ENCODE measurements at regions of chr12 and their contacts with region 1.

Region 1: GRCh38 chr12:53424626-53425514 is 1.2 kb downstream of the AMHR2 start:
- DNase-seq: peak; percentile 88
- H3K4me3 ChIP-seq: peak overlapping the region in 1 of 2 donors; percentile 5
- H3K27ac ChIP-seq: peak overlapping the region; percentile 65 to 81
- H3K4me1 ChIP-seq: peaks cover 29% of the 10 kb centered on the region
- H3K27me3 ChIP-seq: no peaks in the 10 kb centered on the region
- CTCF ChIP-seq: no peak
- POLR2A ChIP-seq: no peak

Region 2: DNA sequence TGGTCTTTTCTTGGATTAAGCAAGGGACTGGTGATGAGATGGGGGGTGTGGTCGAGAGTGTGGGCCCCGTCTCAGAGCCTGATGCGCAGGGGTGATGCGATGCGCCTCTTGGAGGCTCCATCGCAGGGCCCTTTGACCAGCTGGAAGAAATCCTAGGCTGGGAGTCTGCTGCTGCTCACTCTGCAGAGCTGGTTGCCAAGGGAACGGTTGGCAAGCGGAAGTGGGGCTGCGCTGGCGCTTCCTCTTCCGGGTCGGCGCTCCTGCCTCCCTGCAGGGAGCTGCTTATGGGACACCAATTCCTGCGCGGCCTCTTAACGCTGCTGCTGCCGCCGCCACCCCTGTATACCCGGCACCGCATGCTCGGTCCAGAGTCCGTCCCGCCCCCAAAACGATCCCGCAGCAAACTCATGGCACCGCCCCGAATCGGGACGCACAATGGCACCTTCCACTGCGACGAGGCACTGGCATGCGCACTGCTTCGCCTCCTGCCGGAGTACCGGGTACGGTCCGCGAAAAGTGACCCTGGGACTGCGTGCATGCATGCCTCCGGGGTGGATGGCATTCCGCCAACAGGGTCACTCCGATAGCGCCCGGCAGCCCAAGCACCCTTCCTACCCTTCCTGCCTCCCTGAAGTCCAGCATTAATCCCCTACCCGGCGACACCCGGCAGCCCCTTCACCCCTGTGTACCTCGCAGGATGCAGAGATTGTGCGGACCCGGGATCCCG is 125.3 kb before region 1 on chr12 and contains the start of gene MYG1:
- intact Hi-C with region 1: no loop called
- DNase-seq: peak; percentile 95
- H3K4me3 ChIP-seq: peak within 1 kb of the TSS; percentile 72 to 87
- H3K27ac ChIP-seq: peak within 1 kb of the TSS; percentile 21 to 50
- H3K4me1 ChIP-seq: peaks cover 22% of the 10 kb centered on the region
- H3K27me3 ChIP-seq: no peaks in the 10 kb centered on the region
- CTCF ChIP-seq: no peak
- POLR2A ChIP-seq: no peak
- total RNA-seq, gene MYG1: 106 to 117 TPM

Region 3: GRCh38 chr12:53352331-53353256 is 72.3 kb before region 1 on chr12:
- intact Hi-C with region 1: loop called (anchors 5 kb)
- DNase-seq: peak; percentile 93
- H3K4me3 ChIP-seq: no peak overlapping the region
- H3K27ac ChIP-seq: no peak overlapping the region
- H3K4me1 ChIP-seq: no peaks in the 10 kb centered on the region
- H3K27me3 ChIP-seq: no peaks in the 10 kb centered on the region
- CTCF ChIP-seq: peak; percentile 89 to 95 (median 94)
- POLR2A ChIP-seq: no peak

Measured in testis (tissue), 5 donors.